A549 (cell line): ENCODE measurements at regions of chr18 and their contacts with region 1.

Region 1: DNA sequence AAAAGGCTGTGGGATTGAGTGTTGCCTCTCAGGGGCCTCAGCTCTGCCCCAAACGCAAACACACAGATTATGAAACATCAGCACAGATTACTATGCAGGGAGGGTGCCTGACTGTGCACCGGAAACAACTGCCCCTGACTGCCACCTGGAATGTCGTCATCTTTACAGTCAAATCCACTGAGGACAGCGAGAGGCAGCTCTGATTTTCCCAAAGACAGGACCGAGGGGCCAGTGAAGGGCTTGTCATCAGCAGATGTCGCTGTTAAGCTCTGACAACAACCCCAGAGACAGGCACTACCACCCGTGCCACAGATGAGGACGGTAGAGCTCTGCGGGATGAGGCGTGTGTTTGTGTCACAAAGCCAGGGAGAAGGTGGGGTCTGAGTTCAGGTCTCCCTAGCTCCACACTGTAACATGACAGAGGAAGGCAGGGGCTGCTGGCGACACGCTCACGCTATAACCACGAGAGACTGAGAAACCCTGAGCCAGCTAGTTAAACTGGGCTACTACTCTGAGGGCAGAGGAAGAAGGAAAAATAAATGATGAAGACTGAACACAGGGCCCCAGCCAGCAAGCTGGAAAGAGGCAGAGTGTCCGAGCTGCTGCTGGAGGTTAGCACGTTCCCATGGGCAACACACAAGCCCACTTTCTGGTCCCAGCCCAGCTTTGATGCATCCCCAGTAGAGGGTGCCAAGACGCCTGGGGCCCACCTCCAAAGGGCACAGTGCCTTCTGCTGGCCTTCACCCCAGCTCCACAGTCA is 47.0 kb downstream of the PARD6G start:
- DNase-seq: peak; percentile 7 to 29
- ATAC-seq: peak; percentile 86 to 87; a peak in 5 of 6 replicates
- H3K4me3 ChIP-seq: no peak overlapping the region
- H3K27ac ChIP-seq: no peak overlapping the region
- H3K4me1 ChIP-seq: no peaks in the 10 kb centered on the region
- CTCF ChIP-seq: peak; percentile 32; the same call in 1 of the 3 replicates
- EP300 ChIP-seq: no peak
- POLR2A ChIP-seq: no peak
- RAD21 ChIP-seq: peak; percentile 26 to 43; a peak in 2 of 5 replicates

Region 2: GRCh38 chr18:79962835-79963657 is 237.3 kb before region 1 on chr18:
- CTCF ChIA-PET with region 1: no interaction called
- POLR2A ChIA-PET with region 1: no interaction called
- DNase-seq: no peak
- ATAC-seq: no peak
- H3K4me3 ChIP-seq: no peak overlapping the region
- H3K27ac ChIP-seq: no peak overlapping the region
- H3K4me1 ChIP-seq: peaks cover 7% of the 10 kb centered on the region
- CTCF ChIP-seq: no peak
- EP300 ChIP-seq: no peak
- POLR2A ChIP-seq: no peak
- RAD21 ChIP-seq: no peak

Region 3: GRCh38 chr18:80004600-80005342 is 195.6 kb before region 1 on chr18:
- CTCF ChIA-PET with region 1: no interaction called
- POLR2A ChIA-PET with region 1: no interaction called
- DNase-seq: no peak
- ATAC-seq: no peak
- H3K4me3 ChIP-seq: no peak overlapping the region
- H3K27ac ChIP-seq: no peak overlapping the region
- H3K4me1 ChIP-seq: peaks cover 2% of the 10 kb centered on the region
- CTCF ChIP-seq: no peak
- EP300 ChIP-seq: no peak
- POLR2A ChIP-seq: no peak
- RAD21 ChIP-seq: no peak

Region 4: GRCh38 chr18:80247403-80247916 is 47.1 kb after region 1 on chr18 and contains the start of gene PARD6G:
- CTCF ChIA-PET with region 1: interaction called, 15 read pairs
- POLR2A ChIA-PET with region 1: no interaction called
- DNase-seq: peak; percentile 45 to 54
- ATAC-seq: peak; percentile 87 to 88
- H3K4me3 ChIP-seq: peak within 1 kb of the TSS; percentile 88
- H3K27ac ChIP-seq: peak within 1 kb of the TSS; percentile 69 to 88; a peak in 5 of 6 replicates
- H3K4me1 ChIP-seq: no peaks in the 10 kb centered on the region
- CTCF ChIP-seq: no peak
- EP300 ChIP-seq: no peak
- POLR2A ChIP-seq: no peak
- RAD21 ChIP-seq: no peak
- polyA plus RNA-seq, gene PARD6G: 1.6 TPM in 2 replicates

Region 5: GRCh38 chr18:80253871-80254492 is 53.6 kb after region 1 on chr18:
- CTCF ChIA-PET with region 1: interaction called, 25 read pairs
- POLR2A ChIA-PET with region 1: no interaction called
- DNase-seq: peak in 1 of 2 experiments; percentile 23
- ATAC-seq: peak; percentile 20 to 71; a peak in 3 of 6 replicates
- H3K4me3 ChIP-seq: no peak overlapping the region
- H3K27ac ChIP-seq: no peak overlapping the region
- H3K4me1 ChIP-seq: no peaks in the 10 kb centered on the region
- CTCF ChIP-seq: no peak
- EP300 ChIP-seq: no peak
- POLR2A ChIP-seq: no peak
- RAD21 ChIP-seq: no peak